ENCODE measurements at regions of chr1 and their contacts with region 1.

Region 1: DNA sequence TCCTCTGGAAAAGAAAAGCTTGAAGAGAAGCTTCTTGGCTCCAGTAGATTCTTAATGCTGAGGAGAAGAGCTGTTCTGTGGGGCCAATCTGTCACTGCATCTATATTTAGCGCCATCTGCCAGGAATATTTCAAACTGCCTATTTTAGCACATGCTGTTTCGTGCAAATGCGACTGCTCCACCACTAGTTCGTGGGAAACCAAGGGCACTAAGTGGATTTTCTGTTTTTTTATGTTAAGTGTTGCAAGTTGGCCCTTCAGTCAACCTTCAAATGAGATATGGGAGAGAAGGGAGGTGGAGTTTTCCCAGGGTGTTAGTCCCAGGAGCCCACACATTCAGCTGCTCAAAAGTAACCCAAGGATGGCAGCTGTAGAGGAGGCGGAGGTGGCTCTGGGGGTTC is 91.9 kb downstream of the TSEN15 start:
- DNase-seq: no peak
- ATAC-seq: no peak
- H3K4me3 ChIP-seq: no peak overlapping the region
- H3K4me3 Mint-ChIP-seq: no peak overlapping the region
- H3K27ac ChIP-seq: no peak overlapping the region
- H3K27ac Mint-ChIP-seq: no peak overlapping the region
- H3K4me1 ChIP-seq: no peaks in the 10 kb centered on the region
- H3K4me1 Mint-ChIP-seq: no peaks in the 10 kb centered on the region
- H3K27me3 ChIP-seq: peaks cover 0 to 5% of the 10 kb centered on the region in 2 experiments
- H3K27me3 Mint-ChIP-seq: peaks cover 32% of the 10 kb centered on the region
- CTCF ChIP-seq: no peak

Region 2: DNA sequence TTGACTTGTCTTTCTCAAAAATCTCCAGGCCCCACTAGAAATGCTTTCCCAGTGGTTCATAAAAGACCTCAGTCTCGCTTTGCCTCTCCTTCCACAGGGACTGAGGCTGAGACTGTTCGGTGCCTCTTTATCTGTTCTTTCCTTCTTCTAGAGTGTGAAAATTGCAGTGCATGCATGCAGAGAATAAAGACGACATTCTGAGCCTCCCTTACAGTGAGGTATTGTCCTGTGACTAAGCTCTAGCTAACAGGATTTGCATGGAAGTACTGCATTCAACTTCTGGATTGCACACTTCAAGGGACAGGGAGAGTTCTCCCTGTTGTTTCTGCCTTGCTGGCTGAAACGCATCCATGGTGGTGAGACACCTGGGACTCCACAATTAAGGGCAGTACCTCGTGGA is 175.1 kb before region 1 on chr1:
- CTCF ChIA-PET with region 1: no interaction called
- POLR2A ChIA-PET with region 1: no interaction called
- intact Hi-C with region 1: no loop called
- DNase-seq: no peak
- ATAC-seq: no peak
- H3K4me3 ChIP-seq: no peak overlapping the region
- H3K4me3 Mint-ChIP-seq: no peak overlapping the region
- H3K27ac ChIP-seq: peak overlapping the region in 1 of 2 experiments; percentile 17
- H3K27ac Mint-ChIP-seq: no peak overlapping the region
- H3K4me1 ChIP-seq: no peaks in the 10 kb centered on the region
- H3K4me1 Mint-ChIP-seq: peaks cover 10% of the 10 kb centered on the region
- H3K27me3 ChIP-seq: no peaks in the 10 kb centered on the region
- H3K27me3 Mint-ChIP-seq: peaks cover 3% of the 10 kb centered on the region
- CTCF ChIP-seq: no peak

Region 3: DNA sequence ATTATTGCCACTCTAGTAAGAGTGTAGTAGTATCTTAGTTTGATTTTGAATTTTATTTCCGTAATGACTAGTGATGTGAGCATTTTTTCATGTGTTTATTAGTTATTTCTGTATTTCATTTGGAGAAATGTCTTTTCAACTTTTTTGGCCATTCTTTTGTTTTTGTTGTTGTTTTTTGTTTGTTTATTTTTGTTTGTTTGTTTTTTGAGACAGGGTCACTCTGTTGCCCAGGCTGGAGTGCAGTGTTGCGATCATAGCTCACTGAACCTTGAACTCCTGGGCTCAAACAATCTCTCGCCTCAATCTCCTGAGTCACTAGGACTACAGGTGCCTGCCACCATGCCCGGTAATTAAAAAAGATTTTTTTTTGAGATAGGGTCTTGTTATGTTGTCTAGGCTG is 15.9 kb before region 1 on chr1:
- CTCF ChIA-PET with region 1: no interaction called
- POLR2A ChIA-PET with region 1: no interaction called
- intact Hi-C with region 1: no loop called
- DNase-seq: no peak
- ATAC-seq: no peak
- H3K4me3 ChIP-seq: no peak overlapping the region
- H3K4me3 Mint-ChIP-seq: no peak overlapping the region
- H3K27ac ChIP-seq: no peak overlapping the region
- H3K27ac Mint-ChIP-seq: no peak overlapping the region
- H3K4me1 ChIP-seq: no peaks in the 10 kb centered on the region
- H3K4me1 Mint-ChIP-seq: no peaks in the 10 kb centered on the region
- H3K27me3 ChIP-seq: no peaks in the 10 kb centered on the region
- H3K27me3 Mint-ChIP-seq: no peaks in the 10 kb centered on the region
- CTCF ChIP-seq: no peak

Region 4: GRCh38 chr1:184176058-184176457 is 32.6 kb after region 1 on chr1:
- CTCF ChIA-PET with region 1: no interaction called
- POLR2A ChIA-PET with region 1: no interaction called
- intact Hi-C with region 1: loop called in 1 of 2 experiments (anchors 1 kb)
- DNase-seq: no peak
- ATAC-seq: no peak
- H3K4me3 ChIP-seq: no peak overlapping the region
- H3K4me3 Mint-ChIP-seq: no peak overlapping the region
- H3K27ac ChIP-seq: no peak overlapping the region
- H3K27ac Mint-ChIP-seq: no peak overlapping the region
- H3K4me1 ChIP-seq: no peaks in the 10 kb centered on the region
- H3K4me1 Mint-ChIP-seq: no peaks in the 10 kb centered on the region
- H3K27me3 ChIP-seq: peaks cover 0 to 2% of the 10 kb centered on the region in 2 experiments
- H3K27me3 Mint-ChIP-seq: no peaks in the 10 kb centered on the region
- CTCF ChIP-seq: no peak

Measured in CD8-positive, alpha-beta T cell (primary cell).